GM12878 (cell line): ENCODE measurements at regions of chr13 and their contacts with region 1.

Region 1: GRCh38 chr13:77310579-77311279 is 16.2 kb downstream of the MYCBP2 start:
- DNase-seq: no peak
- ATAC-seq: no peak
- H3K4me3 ChIP-seq: no peak overlapping the region
- H3K27ac ChIP-seq: no peak overlapping the region
- H3K4me1 ChIP-seq: peaks cover 15% of the 10 kb centered on the region
- H3K27me3 ChIP-seq: no peaks in the 10 kb centered on the region
- CTCF ChIP-seq: no peak
- EP300 ChIP-seq: no peak
- POLR2A ChIP-seq: no peak
- RAD21 ChIP-seq: no peak

Region 2: GRCh38 chr13:77300176-77301037 is 10.3 kb before region 1 on chr13:
- CTCF ChIA-PET with region 1: interaction called, 3 read pairs
- POLR2A ChIA-PET with region 1: interaction called, 8 read pairs
- RAD21 ChIA-PET with region 1: interaction called, 5 read pairs
- SMC1A ChIA-PET with region 1: interaction called, 35 read pairs
- in situ Hi-C with region 1: no loop called
- intact Hi-C with region 1: no loop called
- DNase-seq: no peak
- ATAC-seq: peak; percentile 52
- H3K4me3 ChIP-seq: peak overlapping the region; percentile 30; the same call in 1 of the 2 replicates
- H3K27ac ChIP-seq: peak overlapping the region; percentile 80
- H3K4me1 ChIP-seq: peaks cover 28% of the 10 kb centered on the region
- H3K27me3 ChIP-seq: no peaks in the 10 kb centered on the region
- CTCF ChIP-seq: no peak
- EP300 ChIP-seq: no peak
- POLR2A ChIP-seq: no peak
- RAD21 ChIP-seq: no peak

Region 3: GRCh38 chr13:77465603-77466205 is 155.0 kb after region 1 on chr13:
- CTCF ChIA-PET with region 1: no interaction called
- POLR2A ChIA-PET with region 1: no interaction called
- RAD21 ChIA-PET with region 1: no interaction called
- SMC1A ChIA-PET with region 1: no interaction called
- in situ Hi-C with region 1: no loop called
- intact Hi-C with region 1: no loop called
- DNase-seq: no peak
- ATAC-seq: no peak
- H3K4me3 ChIP-seq: no peak overlapping the region
- H3K27ac ChIP-seq: no peak overlapping the region
- H3K4me1 ChIP-seq: no peaks in the 10 kb centered on the region
- H3K27me3 ChIP-seq: no peaks in the 10 kb centered on the region
- CTCF ChIP-seq: no peak
- EP300 ChIP-seq: no peak
- POLR2A ChIP-seq: no peak
- RAD21 ChIP-seq: no peak